HAP-1 (cell line): ENCODE measurements at regions of chr4 and their contacts with region 1.

Region 1: DNA sequence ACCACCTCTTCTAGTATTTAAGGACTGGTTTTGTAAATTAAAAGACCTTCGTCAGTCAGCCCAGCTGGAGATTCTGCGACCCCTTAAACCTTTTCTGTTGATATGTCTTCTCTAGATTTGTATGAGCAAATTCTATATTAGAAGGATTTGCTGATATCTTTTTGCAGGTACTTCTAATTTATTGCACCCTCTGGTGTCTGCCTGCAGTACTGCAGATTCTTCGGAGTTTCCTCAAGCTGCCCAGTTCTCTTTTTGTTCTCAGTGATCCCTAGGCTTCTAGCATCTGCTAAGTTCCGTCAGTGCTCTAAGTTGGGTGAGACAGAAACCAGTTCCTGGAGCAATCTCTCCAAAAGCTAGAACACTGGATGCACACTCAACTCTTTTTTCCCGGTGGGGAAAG is 545.2 kb downstream of the C4orf33 start:
- DNase-seq: peak; percentile 48 to 75
- H3K4me3 ChIP-seq: no peak overlapping the region
- H3K4me1 ChIP-seq: no peaks in the 10 kb centered on the region
- H3K27me3 ChIP-seq: no peaks in the 10 kb centered on the region

Region 2: GRCh38 chr4:129064717-129065116 is 576.5 kb before region 1 on chr4:
- in situ Hi-C with region 1: no loop called
- DNase-seq: no peak
- H3K4me3 ChIP-seq: no peak overlapping the region
- H3K4me1 ChIP-seq: no peaks in the 10 kb centered on the region
- H3K27me3 ChIP-seq: no peaks in the 10 kb centered on the region

Region 3: GRCh38 chr4:129362674-129363274 is 278.4 kb before region 1 on chr4:
- in situ Hi-C with region 1: loop called (anchors 25 kb)
- DNase-seq: peak; percentile 65 to 77
- H3K4me3 ChIP-seq: no peak overlapping the region
- H3K4me1 ChIP-seq: no peaks in the 10 kb centered on the region
- H3K27me3 ChIP-seq: no peaks in the 10 kb centered on the region